Activated CD8-positive, alpha-beta T cell treated with anti-CD3 and anti-CD28 coated beads, Interleukin-2, amount 10 ng/mL, durations not matched to agents 7 days and 5 days (primary cell): ENCODE measurements at regions of chr17 and their contacts with region 1.

Region 1: GRCh38 chr17:45640141-45640850 is 143.8 kb upstream of the CRHR1 start:
- DNase-seq: peak; percentile 77
- ATAC-seq: peak; percentile 82
- H3K4me3 Mint-ChIP-seq: no peak overlapping the region
- H3K27ac Mint-ChIP-seq: no peak overlapping the region
- H3K4me1 Mint-ChIP-seq: peaks cover 17% of the 10 kb centered on the region
- H3K27me3 Mint-ChIP-seq: peaks cover 3% of the 10 kb centered on the region

Region 2: DNA sequence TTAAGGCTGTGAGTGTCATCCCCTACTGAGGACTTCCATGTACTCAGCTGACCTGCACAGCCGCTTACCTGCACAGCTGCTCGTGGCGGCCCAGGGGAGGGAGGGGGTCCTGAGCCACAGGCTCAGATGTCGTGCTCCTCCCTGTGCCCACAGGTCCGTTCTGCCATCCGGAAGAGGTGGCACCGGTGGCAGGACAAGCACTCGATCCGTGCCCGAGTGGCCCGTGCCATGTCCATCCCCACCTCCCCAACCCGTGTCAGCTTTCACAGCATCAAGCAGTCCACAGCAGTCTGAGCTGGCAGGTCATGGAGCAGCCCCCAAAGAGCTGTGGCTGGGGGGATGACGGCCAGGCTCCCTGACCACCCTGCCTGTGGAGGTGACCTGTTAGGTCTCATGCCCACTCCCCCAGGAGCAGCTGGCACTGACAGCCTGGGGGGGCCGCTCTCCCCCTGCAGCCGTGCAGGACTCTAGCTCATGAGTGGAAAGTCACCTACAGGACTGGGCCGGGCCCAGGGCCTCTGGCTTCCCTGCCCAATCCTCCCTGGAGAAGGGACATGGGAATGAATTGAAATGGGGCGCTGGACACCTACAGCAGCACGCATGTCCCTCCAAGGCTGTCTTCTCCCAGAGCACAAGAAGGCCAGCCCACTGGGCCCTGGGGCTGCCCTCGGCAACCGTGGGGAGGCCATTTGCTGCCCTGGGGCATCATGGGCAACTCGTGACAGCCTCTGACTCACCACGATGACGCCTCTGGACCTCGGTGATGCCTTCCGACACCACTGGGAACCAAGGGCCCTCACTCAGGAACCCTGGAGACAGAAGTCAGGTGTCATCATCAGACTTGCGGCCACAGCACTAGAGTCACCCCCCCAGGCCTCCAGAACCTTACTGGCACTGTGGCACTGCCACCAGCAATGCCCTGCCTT is 194.4 kb after region 1 on chr17:
- CTCF ChIA-PET with region 1: interaction called, 62 read pairs
- POLR2A ChIA-PET with region 1: interaction called, 5 read pairs
- DNase-seq: no peak
- ATAC-seq: no peak
- H3K4me3 Mint-ChIP-seq: no peak overlapping the region
- H3K27ac Mint-ChIP-seq: no peak overlapping the region
- H3K4me1 Mint-ChIP-seq: no peaks in the 10 kb centered on the region
- H3K27me3 Mint-ChIP-seq: no peaks in the 10 kb centered on the region

Region 3: DNA sequence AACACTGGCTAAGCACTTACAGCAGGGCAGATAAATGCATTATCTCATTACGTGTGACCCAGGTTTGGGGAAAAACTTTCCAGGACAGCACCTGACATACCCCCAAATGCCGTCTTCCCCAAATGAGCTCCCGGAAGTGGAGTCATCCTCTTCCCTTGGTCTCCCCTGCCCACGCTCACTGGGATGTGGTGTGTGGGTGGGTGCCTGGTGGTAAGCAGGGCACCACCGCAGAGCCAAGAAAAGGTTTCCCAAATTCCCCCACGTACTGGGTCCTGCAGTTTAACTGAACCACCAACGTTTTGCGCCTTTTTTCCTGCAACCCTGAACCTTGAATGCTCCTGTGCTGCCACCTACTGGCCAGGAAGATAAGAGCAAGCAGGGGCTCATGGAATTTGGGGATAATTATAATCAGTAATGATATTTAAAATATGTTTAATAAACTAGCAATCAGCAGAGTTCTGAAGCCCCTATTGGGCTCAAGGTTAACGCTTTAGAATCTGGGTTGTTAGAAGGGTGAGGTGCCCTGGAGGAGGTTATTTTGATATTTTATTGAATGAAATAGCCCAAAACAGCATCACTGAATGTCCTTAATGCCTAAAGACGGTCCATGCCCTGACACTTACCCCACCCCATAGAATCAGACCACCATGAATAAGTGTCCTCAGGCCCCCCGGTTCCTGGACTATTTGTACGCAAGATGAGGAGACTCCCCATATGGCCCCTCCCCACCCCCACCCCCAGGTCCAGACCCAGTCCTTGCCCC is 212.4 kb after region 1 on chr17:
- CTCF ChIA-PET with region 1: interaction called, 19 read pairs
- POLR2A ChIA-PET with region 1: no interaction called
- DNase-seq: peak; percentile 70
- ATAC-seq: no peak
- H3K4me3 Mint-ChIP-seq: no peak overlapping the region
- H3K27ac Mint-ChIP-seq: no peak overlapping the region
- H3K4me1 Mint-ChIP-seq: peaks cover 9% of the 10 kb centered on the region
- H3K27me3 Mint-ChIP-seq: peaks cover 14% of the 10 kb centered on the region